GM12878 (cell line): ENCODE measurements at regions of chr6 and their contacts with region 1.

Region 1: DNA sequence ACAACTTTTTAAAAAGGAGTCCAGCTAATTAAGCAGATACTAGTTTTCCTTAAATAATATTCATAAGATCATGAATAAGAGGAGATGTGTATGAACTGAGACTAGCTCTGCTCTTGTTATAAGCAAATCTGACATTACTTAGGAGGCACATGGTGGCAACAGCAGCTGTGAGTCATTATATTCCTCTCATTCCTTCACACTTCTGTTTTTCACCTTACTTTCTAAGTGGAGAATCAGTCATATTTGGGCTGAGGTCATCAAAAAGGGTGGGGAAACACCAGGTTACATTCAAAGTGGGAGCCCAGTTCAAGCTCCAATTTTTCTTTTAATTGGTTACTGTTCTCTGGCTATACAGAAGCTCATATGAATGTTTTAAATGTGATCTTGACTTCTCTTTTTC is 6.0 kb upstream of the RIPPLY2 start:
- DNase-seq: peak; percentile 51
- ATAC-seq: peak; percentile 98
- H3K4me3 ChIP-seq: no peak overlapping the region
- H3K27ac ChIP-seq: no peak overlapping the region
- H3K4me1 ChIP-seq: no peaks in the 10 kb centered on the region
- H3K27me3 ChIP-seq: no peaks in the 10 kb centered on the region
- CTCF ChIP-seq: no peak
- EP300 ChIP-seq: peak; percentile 69 to 85; a peak in 3 of 4 replicates
- POLR2A ChIP-seq: no peak
- RAD21 ChIP-seq: no peak

Region 2: DNA sequence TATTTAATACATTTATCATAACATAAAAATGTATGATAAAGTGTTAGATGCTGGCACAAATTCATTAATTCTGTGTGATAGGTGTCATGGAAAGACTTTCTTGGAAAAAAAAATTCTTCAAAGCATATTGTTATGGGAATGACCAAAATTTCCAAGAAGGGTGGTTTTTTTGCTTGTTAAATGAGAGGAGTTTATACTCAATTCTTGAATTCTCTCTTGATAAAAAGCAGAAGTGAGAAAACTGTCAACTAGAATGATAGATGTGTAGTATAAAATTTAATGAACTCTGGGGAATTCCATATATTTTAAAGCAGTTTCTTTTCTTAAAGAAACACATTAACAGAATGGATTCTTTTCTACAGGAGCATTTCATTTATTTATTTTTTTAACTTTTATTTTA is 76.3 kb before region 1 on chr6:
- CTCF ChIA-PET with region 1: no interaction called
- POLR2A ChIA-PET with region 1: interaction called, 3 read pairs
- RAD21 ChIA-PET with region 1: interaction called, 13 read pairs
- SMC1A ChIA-PET with region 1: interaction called, 4 read pairs
- in situ Hi-C with region 1: no loop called
- intact Hi-C with region 1: loop called (anchors 5 kb)
- DNase-seq: no peak
- ATAC-seq: peak; percentile 78
- H3K4me3 ChIP-seq: no peak overlapping the region
- H3K27ac ChIP-seq: no peak overlapping the region
- H3K4me1 ChIP-seq: no peaks in the 10 kb centered on the region; the same call in 1 of the 2 replicates
- H3K27me3 ChIP-seq: no peaks in the 10 kb centered on the region
- CTCF ChIP-seq: no peak
- EP300 ChIP-seq: peak; percentile 83 to 86
- POLR2A ChIP-seq: no peak
- RAD21 ChIP-seq: no peak